ENCODE measurements at regions of chr14 and their contacts with region 1.

Region 1: GRCh38 chr14:49633640-49634546 is 1.2 kb downstream of the DNAAF2 start:
- ATAC-seq: peak; percentile 69 to 90 (median 85)
- H3K4me3 ChIP-seq: peak overlapping the region; percentile 56 to 90 (median 70)
- H3K27ac ChIP-seq: peak overlapping the region; percentile 88 to 92
- H3K4me1 ChIP-seq: peaks cover 6 to 13% of the 10 kb centered on the region in 2 donors

Region 2: DNA sequence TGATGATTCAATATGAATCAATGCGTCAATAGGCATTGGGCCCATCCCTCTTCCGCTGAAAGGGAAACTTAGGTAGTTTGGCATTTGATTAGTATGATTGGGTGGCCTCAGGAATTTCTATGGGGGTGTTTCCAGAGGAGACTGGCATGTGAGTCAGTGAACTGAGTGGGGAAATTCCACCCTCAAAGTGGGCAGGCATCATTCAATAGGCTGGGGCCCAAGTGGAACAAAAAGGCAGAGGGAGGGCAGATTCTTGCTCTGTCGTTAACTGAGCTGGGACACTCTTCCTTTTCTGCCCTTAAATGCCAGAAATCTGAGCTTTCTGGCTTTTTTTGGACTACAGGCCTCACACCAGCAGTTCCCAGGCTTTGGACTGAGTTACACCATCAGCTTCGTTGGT is 421.2 kb before region 1 on chr14:
- in situ Hi-C with region 1: no loop called
- ATAC-seq: no peak
- H3K4me3 ChIP-seq: no peak overlapping the region
- H3K27ac ChIP-seq: no peak overlapping the region
- H3K4me1 ChIP-seq: no peaks in the 10 kb centered on the region

Region 3: DNA sequence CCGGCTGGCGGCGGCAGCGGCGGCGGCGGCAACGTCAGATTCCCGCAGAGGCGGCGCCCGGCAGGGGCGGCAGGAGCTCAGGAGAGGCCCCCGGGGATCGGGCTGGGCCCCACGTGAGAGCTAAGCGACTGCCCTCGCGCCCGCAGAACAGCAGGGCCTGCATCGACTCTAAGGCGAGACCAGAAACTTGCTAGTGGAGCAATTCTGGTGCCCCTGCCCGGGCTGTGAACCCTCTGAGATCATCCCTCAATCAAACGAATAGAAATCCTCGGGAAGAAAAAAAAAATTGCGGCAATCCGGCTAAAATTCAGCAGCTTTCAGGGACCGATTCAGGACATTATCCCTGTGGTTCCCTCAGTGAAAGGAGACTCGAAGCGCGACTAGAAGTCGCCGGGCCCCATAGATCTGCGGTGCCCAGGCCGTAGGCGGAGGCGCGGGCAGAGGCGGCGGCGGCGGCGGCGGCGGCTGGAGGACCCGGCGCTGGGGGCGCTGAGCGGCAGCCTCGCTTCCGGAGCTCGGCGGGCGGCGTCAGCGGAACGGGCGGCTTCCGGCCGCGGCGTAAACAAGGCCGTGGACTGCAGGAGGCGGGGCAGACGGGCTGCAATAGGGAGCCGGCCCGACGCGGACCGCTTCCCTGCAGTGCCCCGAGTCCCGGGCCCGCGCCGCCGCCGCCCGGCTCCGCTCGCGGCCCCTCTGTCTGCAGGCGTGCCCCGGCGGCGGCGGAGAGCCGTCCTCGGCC is 133.8 kb after region 1 on chr14 and contains the start of gene KLHDC2:
- in situ Hi-C with region 1: loop called in 3 of 9 experiments (anchors 10 to 25 kb)
- ATAC-seq: peak; percentile 66 to 91 (median 86)
- H3K4me3 ChIP-seq: peak within 1 kb of the TSS; percentile 63 to 95 (median 84)
- H3K27ac ChIP-seq: peak within 1 kb of the TSS; percentile 92 to 99
- H3K4me1 ChIP-seq: peaks cover 7 to 24% of the 10 kb centered on the region in 2 donors
- total RNA-seq, gene KLHDC2: 38.4 to 73.2 (median 59.0) TPM

Region 4: GRCh38 chr14:50186107-50186506 is 552.2 kb after region 1 on chr14:
- in situ Hi-C with region 1: no loop called
- ATAC-seq: no peak
- H3K4me3 ChIP-seq: no peak overlapping the region
- H3K27ac ChIP-seq: no peak overlapping the region
- H3K4me1 ChIP-seq: no peaks in the 10 kb centered on the region